Pancreas (tissue), 10 donors: ENCODE measurements at regions of chr15 and their contacts with region 1.

Region 1: GRCh38 chr15:67468416-67468815 is 52.5 kb upstream of the C15orf61 start:
- DNase-seq: no peak
- ATAC-seq: peak in 1 of 4 donors; percentile 41
- H3K4me3 ChIP-seq: no peak overlapping the region
- H3K27ac ChIP-seq: no peak overlapping the region
- H3K4me1 ChIP-seq: no peaks in the 10 kb centered on the region
- H3K27me3 ChIP-seq: no peaks in the 10 kb centered on the region
- CTCF ChIP-seq: no peak

Region 2: GRCh38 chr15:67839929-67840748 is 371.7 kb after region 1 on chr15 and contains the start of gene RNU6-1:
- intact Hi-C with region 1: loop called in 1 of 3 experiments (anchors 10 kb)
- DNase-seq: peak; percentile 90 to 96 (median 93)
- ATAC-seq: peak; percentile 88 to 95 (median 93)
- H3K4me3 ChIP-seq: peak within 1 kb of the TSS; percentile 82 to 95 (median 93)
- H3K27ac ChIP-seq: peak within 1 kb of the TSS; percentile 91 to 99 (median 96)
- H3K4me1 ChIP-seq: peaks cover 0 to 14% (median 4%) of the 10 kb centered on the region in 3 donors
- H3K27me3 ChIP-seq: no peaks in the 10 kb centered on the region
- CTCF ChIP-seq: no peak
- total RNA-seq, gene RNU6-1: not detected